ENCODE measurements at regions of chr1 and their contacts with region 1.

Region 1: DNA sequence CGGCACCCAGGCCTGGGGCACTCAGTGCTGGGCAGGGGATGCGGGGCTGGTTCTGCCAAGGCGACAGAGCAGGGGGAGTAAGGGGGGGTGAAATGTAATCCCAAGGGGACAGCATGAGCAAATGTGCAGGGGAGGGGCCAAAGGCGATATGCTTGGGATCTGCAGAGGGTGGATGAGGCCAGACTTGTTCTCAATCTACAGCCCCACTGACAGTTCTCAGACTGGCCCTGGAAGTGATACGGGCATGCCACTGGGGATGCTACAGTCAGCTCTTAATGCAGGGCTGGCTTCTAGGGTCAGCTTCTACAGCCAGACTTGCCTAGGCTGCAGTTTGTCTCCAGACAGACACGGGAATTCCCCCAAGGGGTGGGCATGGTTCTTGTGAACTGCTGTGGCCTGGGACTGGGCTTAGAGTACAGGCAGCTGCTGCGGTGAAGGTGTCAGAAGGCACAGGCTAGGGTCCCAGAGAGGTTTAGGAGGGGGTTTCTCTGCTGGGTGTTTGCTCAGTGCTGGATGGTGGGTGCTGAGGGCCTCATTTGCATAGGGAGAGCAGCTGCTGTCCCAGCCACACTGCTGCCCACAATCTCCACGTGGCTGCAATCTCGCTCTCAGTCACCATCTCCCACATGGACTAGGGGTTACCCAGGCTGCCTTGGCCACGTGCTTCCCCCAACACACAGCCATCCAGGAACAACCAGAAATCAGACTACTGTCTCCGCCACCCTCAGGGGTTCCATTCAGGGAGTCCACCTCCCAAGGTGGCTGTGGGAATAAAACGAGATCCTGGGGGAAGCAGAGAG is 190.1 kb downstream of the HIVEP3 start:
- DNase-seq: peak; percentile 72
- ATAC-seq: peak; percentile 80
- H3K4me3 Mint-ChIP-seq: peak overlapping the region; percentile 80
- H3K27ac Mint-ChIP-seq: peak overlapping the region; percentile 93
- H3K4me1 Mint-ChIP-seq: peaks cover 74% of the 10 kb centered on the region
- H3K27me3 Mint-ChIP-seq: no peaks in the 10 kb centered on the region
- CTCF ChIP-seq: no peak

Region 2: DNA sequence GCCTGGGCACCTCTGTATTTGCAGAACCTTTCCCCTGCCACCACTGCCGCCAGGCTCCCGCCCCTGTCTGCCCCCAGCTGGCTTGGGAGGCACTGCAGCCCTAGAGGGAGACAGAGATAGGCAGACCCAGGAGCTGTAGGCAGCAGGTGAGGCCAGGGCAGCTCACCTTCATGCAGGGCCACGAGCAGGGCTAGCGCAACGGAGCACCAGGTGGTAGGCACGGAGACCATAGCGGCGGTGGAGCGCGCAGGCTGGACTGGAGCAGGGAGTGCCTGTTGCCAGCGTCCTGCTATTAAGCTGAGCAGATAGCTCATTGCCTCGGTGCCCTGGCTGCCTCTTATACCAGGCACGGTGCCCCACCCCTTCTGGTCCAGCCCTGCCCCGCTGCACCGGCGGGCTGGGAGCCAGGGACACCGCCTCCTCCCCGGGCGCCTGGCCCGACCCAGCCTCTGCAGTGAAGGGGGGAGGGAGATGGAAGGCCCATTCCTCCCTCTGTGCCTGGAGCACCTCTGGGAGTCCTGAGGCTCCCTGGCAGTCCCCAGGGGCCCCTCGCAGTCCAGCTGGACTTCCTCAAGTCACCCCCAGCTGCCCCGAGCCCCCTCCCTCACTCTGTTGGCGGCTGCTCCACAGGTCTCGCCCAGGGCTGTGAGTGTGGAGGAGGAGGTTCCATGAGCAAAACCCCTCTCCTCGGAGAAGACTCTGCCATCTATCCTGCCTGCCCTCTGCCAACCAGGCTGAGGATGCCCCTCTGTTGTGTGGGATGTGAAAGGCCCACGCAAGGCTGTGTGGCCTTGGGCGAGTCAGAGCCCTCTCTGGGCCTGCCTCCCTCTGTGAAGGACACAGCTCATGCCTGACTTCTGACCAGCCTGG is 244.0 kb before region 1 on chr1 and contains the start of gene EDN2:
- CTCF ChIA-PET with region 1: no interaction called
- POLR2A ChIA-PET with region 1: no interaction called
- intact Hi-C with region 1: no loop called
- DNase-seq: no peak
- ATAC-seq: no peak
- H3K4me3 Mint-ChIP-seq: no peak within 1 kb of the TSS
- H3K27ac Mint-ChIP-seq: no peak within 1 kb of the TSS
- H3K4me1 Mint-ChIP-seq: peaks cover 15% of the 10 kb centered on the region
- H3K27me3 Mint-ChIP-seq: peaks cover 24% of the 10 kb centered on the region
- CTCF ChIP-seq: no peak
- total RNA-seq, gene EDN2: not detected in 2 replicates

Region 3: DNA sequence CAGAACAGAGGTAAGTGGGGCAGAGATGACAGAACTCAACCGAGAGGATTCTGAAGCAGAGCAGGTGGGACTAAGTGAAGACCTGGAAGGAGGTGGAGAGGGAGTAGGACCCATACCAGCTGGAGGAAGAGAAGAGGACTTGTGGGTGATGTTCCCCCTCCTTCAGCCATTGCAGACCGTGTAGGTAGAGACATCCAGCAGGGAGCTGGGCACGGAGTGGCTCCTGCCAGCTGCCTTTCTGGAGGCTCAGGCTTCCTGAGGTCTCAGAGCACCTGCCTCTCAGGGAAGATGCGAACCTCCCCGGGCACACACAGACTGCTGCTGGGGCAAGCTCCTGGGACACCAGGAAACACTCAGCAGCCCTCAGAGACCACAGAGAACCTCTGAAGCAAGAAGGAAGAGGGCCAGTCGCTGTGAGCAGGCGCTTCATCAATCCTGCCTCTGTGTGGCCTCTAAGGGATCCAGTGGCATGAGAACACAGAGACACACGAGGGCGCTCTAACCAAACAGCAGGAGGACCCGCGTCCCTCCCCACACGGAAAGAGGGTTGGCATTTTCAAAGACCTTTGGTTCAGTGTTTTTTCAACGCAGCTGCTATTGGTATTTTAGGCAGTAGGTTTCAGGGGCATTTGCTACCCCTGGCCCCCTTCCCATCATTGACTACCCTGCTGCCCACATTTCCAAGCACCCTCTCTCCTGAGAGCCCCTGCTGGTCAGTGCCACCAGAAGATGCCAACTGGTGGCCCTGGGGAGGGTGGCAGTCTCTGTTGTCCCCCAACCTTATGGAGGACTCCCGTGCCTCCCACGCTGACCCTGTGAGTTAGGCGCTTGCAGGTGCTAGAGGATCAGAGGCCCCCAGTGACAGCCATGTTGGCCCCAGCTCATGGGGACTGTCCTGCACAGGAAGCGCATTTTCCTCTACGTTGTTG is 154.6 kb before region 1 on chr1:
- CTCF ChIA-PET with region 1: interaction called, 8 read pairs
- POLR2A ChIA-PET with region 1: interaction called, 6 read pairs
- intact Hi-C with region 1: loop called (anchors 1 kb)
- DNase-seq: peak; percentile 63
- ATAC-seq: peak; percentile 96
- H3K4me3 Mint-ChIP-seq: no peak overlapping the region
- H3K27ac Mint-ChIP-seq: no peak overlapping the region
- H3K4me1 Mint-ChIP-seq: peaks cover 23% of the 10 kb centered on the region
- H3K27me3 Mint-ChIP-seq: no peaks in the 10 kb centered on the region
- CTCF ChIP-seq: peak; percentile 70

Region 4: DNA sequence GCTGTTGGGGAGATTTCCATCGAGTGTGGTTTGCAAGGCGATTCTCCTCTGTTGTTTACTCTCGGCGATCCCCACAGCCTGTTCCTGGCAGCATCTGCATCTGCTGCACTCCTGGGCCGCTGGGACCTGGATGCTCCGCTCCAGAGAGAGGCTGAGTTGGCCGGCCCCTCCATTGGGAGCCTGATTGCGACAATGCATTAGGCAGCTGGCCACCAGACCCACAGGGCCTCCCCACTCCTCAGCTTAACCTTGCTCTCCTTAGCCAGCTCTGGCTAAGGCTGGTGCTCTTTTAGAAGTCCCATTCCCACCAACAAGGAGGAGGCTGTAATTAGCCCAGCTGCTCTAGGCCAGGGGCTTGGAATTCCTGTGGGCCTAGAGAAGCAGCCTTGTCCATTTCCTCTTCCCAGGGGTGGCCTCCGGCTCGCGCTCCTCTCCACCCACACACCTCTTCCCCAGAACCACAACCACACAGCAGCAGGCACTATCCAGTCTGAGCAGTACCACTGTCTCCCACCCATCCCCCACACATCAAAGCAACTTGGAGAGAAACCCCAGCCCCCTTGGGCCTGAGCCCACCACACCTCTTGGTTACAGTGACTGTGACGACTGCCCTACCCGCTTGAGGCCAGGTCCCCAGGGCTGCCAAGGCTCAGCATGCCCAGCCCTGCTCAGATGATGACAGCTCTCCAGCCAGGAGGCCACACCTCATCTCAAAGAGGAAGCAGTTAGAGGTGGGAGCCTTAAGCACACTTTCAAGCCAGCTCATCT is 50.3 kb before region 1 on chr1:
- CTCF ChIA-PET with region 1: interaction called, 3 read pairs
- POLR2A ChIA-PET with region 1: interaction called, 31 read pairs
- intact Hi-C with region 1: loop called (anchors 2 kb)
- DNase-seq: no peak
- ATAC-seq: peak; percentile 75
- H3K4me3 Mint-ChIP-seq: no peak overlapping the region
- H3K27ac Mint-ChIP-seq: peak overlapping the region; percentile 44
- H3K4me1 Mint-ChIP-seq: peaks cover 49% of the 10 kb centered on the region
- H3K27me3 Mint-ChIP-seq: no peaks in the 10 kb centered on the region
- CTCF ChIP-seq: no peak

Region 5: GRCh38 chr1:41739061-41739955 is 10.7 kb after region 1 on chr1:
- CTCF ChIA-PET with region 1: interaction called, 15 read pairs
- POLR2A ChIA-PET with region 1: interaction called, 122 read pairs
- intact Hi-C with region 1: loop called (anchors 1 kb)
- DNase-seq: peak; percentile 68
- ATAC-seq: peak; percentile 83
- H3K4me3 Mint-ChIP-seq: peak overlapping the region; percentile 77
- H3K27ac Mint-ChIP-seq: peak overlapping the region; percentile 90
- H3K4me1 Mint-ChIP-seq: peaks cover 84% of the 10 kb centered on the region
- H3K27me3 Mint-ChIP-seq: no peaks in the 10 kb centered on the region
- CTCF ChIP-seq: no peak

Region 6: DNA sequence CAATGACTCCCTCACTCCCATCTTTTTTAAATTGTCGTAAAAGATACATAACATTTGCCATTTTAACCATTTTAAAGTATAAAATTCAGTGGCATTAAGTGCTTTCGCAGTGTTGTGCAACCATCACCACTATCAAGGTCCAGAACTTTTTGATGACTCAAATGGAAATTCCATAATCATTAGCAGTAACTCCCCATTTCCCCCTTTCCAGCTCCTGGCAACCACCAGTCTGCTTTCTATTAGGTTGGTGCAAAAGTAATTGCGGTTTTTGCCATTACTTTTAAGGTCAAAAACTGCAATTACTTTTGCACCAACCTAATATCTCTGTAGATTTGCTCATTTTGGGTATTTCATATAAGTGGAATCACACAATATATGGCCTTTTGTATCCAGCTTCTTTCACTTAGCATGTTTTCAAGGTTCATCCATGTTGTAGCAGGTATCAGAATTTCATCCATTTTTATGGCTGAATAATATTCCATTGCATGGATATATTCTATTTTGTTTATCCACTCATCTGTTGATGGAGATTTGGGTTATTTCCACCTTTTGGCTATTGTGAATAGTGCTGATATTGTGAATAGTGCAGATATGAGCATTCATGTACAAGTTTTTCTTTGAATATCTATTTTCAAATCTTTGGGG is 30.4 kb after region 1 on chr1:
- CTCF ChIA-PET with region 1: no interaction called
- POLR2A ChIA-PET with region 1: interaction called, 10 read pairs
- intact Hi-C with region 1: no loop called
- DNase-seq: no peak
- ATAC-seq: no peak
- H3K4me3 Mint-ChIP-seq: no peak overlapping the region
- H3K27ac Mint-ChIP-seq: no peak overlapping the region
- H3K4me1 Mint-ChIP-seq: peaks cover 16% of the 10 kb centered on the region
- H3K27me3 Mint-ChIP-seq: no peaks in the 10 kb centered on the region
- CTCF ChIP-seq: no peak

Region 7: GRCh38 chr1:41812051-41812450 is 83.4 kb after region 1 on chr1:
- CTCF ChIA-PET with region 1: interaction called, 10 read pairs
- POLR2A ChIA-PET with region 1: interaction called, 9 read pairs
- intact Hi-C with region 1: loop called (anchors 1 kb)
- DNase-seq: no peak
- ATAC-seq: peak; percentile 34
- H3K4me3 Mint-ChIP-seq: no peak overlapping the region
- H3K27ac Mint-ChIP-seq: no peak overlapping the region
- H3K4me1 Mint-ChIP-seq: peaks cover 35% of the 10 kb centered on the region
- H3K27me3 Mint-ChIP-seq: no peaks in the 10 kb centered on the region
- CTCF ChIP-seq: no peak

Region 8: DNA sequence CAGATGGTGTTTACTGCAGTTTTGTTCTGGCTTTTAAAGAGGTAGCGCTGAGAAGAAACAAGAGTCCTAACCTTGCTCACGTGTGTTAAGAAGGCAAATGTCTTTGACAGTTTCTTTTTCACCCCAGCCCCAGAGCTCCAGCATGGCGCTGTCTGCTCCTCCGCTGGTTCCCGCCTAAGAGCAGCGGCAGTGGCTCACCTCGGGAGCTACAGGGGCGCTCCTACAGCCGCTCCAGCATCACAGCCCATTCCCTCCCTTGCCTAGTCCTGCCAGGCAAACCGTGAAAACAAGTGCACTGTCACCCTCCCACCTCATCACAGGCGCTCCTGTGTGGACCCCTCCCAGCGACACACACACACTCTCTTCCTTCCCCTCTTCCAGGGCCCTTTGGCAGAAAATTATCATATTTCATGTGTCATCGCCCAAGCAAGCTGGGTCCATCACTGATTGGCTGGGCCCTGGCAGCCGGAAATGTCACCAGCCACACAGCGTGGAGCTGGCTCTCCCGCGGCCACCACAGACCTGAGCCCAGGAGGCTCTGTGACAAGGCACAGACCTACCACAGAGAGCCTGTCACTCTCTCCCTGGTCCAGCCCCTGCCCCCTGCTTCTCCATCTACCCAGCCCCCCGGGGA is 191.3 kb after region 1 on chr1:
- CTCF ChIA-PET with region 1: no interaction called
- POLR2A ChIA-PET with region 1: no interaction called
- intact Hi-C with region 1: no loop called
- DNase-seq: no peak
- ATAC-seq: peak; percentile 80
- H3K4me3 Mint-ChIP-seq: peak overlapping the region; percentile 78
- H3K27ac Mint-ChIP-seq: no peak overlapping the region
- H3K4me1 Mint-ChIP-seq: peaks cover 28% of the 10 kb centered on the region
- H3K27me3 Mint-ChIP-seq: peaks cover 44% of the 10 kb centered on the region
- CTCF ChIP-seq: no peak

Region 9: DNA sequence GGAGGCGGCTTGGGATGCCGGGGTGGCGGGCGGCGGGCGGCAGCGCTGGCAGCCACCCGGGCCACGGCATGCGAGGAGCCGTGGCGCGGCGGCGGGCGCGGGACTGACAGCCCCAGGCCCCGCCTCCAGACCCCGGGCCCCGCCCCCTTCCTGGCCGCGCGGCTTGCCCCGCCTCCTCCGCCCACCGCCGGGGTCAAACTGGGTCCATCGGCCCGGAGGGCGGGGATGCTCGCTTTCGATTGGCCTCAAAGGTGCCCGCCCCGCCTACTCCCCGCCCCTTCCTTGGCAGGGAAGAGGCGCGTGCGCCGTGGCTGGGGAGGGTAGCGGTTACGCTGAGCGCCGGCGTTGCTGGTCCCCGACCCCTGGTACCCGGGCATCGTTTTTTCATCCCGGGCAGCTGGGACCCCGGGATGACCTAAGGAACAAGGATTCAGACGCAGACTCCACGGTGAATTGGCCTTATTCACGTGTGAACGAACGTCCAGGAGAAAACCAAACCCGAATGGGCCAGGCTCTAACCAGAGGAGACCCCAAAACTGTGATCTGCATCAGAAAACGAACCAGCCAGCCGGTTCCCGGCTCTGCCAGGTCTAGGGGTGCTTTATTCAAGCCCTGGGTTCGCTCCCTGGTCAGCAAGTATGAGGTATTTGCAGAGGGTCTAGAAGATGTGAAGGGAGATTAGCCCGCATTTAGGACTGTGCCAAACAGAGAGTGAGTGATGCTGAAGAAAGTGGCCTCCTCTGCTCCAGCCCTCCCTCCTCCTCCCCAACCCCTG is 307.4 kb after region 1 on chr1:
- CTCF ChIA-PET with region 1: no interaction called
- POLR2A ChIA-PET with region 1: no interaction called
- intact Hi-C with region 1: loop called (anchors 5 kb)
- DNase-seq: peak; percentile 99
- ATAC-seq: peak; percentile 95
- H3K4me3 Mint-ChIP-seq: peak overlapping the region; percentile 88
- H3K27ac Mint-ChIP-seq: no peak overlapping the region
- H3K4me1 Mint-ChIP-seq: peaks cover 11% of the 10 kb centered on the region
- H3K27me3 Mint-ChIP-seq: peaks cover 14% of the 10 kb centered on the region
- CTCF ChIP-seq: no peak